Activated CD4-positive, alpha-beta memory T cell treated with anti-CD3 and anti-CD28 coated beads for 36 hours (primary cell): ENCODE measurements at regions of chr4 and their contacts with region 1.

Region 1: DNA sequence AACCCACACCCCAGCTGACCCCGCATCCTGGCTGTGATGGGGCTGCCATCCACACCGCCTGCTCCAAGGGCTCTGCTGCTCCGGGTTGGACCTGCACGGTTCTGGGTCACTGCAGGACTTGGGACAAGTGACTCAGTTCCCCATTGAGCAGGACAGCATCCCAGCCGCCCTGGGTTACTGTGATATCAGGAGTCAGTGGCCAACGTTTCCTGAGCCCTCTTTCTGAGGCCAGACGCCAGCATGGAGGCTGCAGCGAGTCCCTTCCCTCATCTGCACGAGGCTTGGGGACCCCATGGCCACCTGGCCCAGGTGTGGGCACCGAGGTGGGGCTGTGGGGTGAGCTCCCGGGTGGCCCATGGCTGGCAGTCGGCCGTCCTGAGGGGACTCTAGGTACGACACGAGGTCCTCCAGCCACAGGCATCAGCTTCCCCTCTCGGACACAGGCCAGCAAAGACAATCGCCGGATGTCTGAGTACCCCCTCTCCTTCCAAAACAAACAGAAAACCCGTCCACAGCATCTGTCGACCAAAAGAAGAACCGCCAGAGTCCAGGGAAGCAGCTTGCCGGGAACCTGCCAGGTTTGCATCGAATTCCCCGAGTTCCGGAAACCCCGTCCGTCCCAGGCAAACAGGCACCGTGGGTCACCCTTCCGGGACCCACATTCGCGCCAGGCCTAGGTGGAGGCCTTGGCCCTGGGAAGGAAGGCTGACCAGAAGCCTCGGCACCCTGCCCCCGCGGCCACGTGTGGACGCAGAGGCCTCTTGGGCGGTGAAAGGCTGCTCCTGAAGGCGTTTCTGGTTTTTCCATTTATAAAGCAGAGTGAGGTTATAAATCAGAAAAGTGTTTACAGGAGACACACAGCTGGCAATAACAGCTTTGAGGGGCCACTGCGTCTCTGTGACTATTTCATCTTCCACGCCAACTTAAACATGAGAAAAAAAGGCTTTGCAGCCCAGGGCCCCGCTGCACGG is 136.0 kb downstream of the FAM53A start:
- DNase-seq: no peak
- H3K4me3 Mint-ChIP-seq: no peak overlapping the region
- H3K27ac Mint-ChIP-seq: no peak overlapping the region
- H3K4me1 Mint-ChIP-seq: peaks cover 20% of the 10 kb centered on the region
- H3K27me3 Mint-ChIP-seq: peaks cover 6% of the 10 kb centered on the region

Region 2: GRCh38 chr4:1628892-1629698 is 81.0 kb after region 1 on chr4:
- CTCF ChIA-PET with region 1: interaction called, 4 read pairs
- POLR2A ChIA-PET with region 1: no interaction called
- intact Hi-C with region 1: loop called (anchors 5 kb)
- DNase-seq: peak; percentile 74
- H3K4me3 Mint-ChIP-seq: no peak overlapping the region
- H3K27ac Mint-ChIP-seq: no peak overlapping the region
- H3K4me1 Mint-ChIP-seq: no peaks in the 10 kb centered on the region
- H3K27me3 Mint-ChIP-seq: no peaks in the 10 kb centered on the region

Region 3: DNA sequence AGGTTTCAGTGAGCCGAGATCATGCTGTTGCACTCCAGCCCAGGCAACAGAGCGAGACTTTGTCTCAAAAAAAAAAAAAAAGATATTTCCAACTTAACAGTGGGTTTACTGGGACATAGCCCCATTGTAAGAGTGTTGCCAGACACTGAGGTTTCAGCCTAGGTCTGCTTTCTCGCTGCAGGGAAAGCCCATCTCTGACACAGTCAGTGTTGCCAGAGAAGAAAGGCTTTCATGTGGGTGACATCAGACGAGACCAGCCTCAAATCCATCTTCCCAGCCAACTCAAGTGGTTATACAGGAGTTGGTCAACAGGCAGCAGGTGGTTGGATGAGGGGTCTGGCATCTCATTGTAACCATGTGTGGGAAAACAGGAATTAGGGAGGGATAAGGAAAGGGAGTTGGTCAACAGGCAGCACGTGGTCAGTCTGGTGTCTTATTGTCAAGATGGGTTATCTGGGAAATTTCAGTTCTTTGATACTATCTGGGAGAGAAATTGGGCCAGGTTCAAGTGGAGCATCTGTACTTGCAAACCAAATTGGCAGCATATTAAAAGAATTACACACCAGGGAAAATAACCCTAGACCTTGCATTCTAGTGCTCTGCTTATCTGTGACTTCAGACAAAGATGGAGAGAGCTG is 419.5 kb after region 1 on chr4:
- CTCF ChIA-PET with region 1: no interaction called
- POLR2A ChIA-PET with region 1: no interaction called
- intact Hi-C with region 1: no loop called
- DNase-seq: no peak
- H3K4me3 Mint-ChIP-seq: no peak overlapping the region
- H3K27ac Mint-ChIP-seq: peak overlapping the region; percentile 43
- H3K4me1 Mint-ChIP-seq: no peaks in the 10 kb centered on the region
- H3K27me3 Mint-ChIP-seq: no peaks in the 10 kb centered on the region